Natural killer cell (primary cell): ENCODE measurements at regions of chr3 and their contacts with region 1.

Region 1: GRCh38 chr3:149086232-149086988 is at the start of gene HLTF:
- DNase-seq: peak; percentile 85 to 96
- ATAC-seq: peak; percentile 98 to 99 (median 98)
- H3K4me3 ChIP-seq: peak within 1 kb of the TSS; percentile 68
- H3K4me3 Mint-ChIP-seq: peak within 1 kb of the TSS; percentile 94
- H3K27ac ChIP-seq: peak within 1 kb of the TSS; percentile 5
- H3K27ac Mint-ChIP-seq: peak within 1 kb of the TSS; percentile 81 to 89
- H3K4me1 ChIP-seq: peaks cover 18% of the 10 kb centered on the region
- H3K4me1 Mint-ChIP-seq: peaks cover 20 to 23% of the 10 kb centered on the region in 2 donors
- H3K27me3 ChIP-seq: no peaks in the 10 kb centered on the region
- H3K27me3 Mint-ChIP-seq: no peaks in the 10 kb centered on the region
- CTCF ChIP-seq: no peak
- total RNA-seq, gene HLTF: 15.0 to 19.0 (median 18.3) TPM

Region 2: DNA sequence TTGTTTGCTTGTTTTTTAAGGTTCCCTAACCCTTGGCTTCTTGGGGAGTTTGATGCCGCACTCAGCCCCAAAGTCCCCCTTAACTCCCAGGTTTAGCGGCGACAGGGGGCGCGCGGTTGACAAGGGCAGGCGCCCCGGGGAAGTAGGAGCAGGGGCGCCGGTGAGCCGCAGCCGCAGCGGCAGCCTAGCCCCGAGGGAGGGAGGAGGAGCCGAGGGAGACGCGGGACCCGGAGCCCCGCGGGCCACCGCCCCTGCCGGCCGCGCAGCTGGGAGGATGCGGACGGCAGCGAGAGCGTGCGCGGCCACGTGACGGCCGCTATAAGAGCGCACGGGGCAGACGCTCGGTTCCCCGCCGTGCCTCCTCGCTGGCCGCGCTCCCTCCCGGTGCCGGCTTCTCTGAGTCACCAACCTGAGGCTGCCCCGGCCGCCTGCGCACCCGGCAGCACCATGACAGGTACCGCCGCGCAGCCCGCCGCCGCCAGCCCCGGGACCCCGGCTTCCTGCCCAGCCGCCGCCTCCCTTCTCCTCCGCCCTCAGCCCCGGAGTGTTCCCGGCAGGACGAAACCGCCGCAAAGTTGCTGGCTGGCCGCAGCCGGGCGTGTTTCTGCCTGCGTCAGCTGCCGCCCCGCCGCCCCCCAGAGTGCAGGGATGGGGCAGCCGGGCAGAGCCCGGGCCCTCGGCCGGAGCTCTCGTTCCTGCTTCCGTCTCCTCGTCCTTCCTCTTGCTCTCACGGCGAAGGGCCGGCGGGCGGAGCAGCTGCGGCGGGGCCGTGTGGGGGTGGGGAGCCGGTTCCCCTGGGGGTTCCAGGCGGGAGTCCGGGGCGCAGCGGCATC is 95.0 kb before region 1 on chr3 and contains the start of gene GYG1:
- intact Hi-C with region 1: loop called (anchors 5 kb)
- DNase-seq: peak; percentile 78 to 93
- ATAC-seq: peak; percentile 83 to 91 (median 88)
- H3K4me3 ChIP-seq: peak within 1 kb of the TSS; percentile 82
- H3K4me3 Mint-ChIP-seq: peak within 1 kb of the TSS; percentile 86
- H3K27ac ChIP-seq: peak within 1 kb of the TSS; percentile 88
- H3K27ac Mint-ChIP-seq: peak within 1 kb of the TSS; percentile 70 to 91
- H3K4me1 ChIP-seq: peaks cover 25% of the 10 kb centered on the region
- H3K4me1 Mint-ChIP-seq: peaks cover 28 to 30% of the 10 kb centered on the region in 2 donors
- H3K27me3 ChIP-seq: no peaks in the 10 kb centered on the region
- H3K27me3 Mint-ChIP-seq: no peaks in the 10 kb centered on the region
- CTCF ChIP-seq: no peak
- total RNA-seq, gene GYG1: 46.6 to 56.5 (median 49.6) TPM

Region 3: DNA sequence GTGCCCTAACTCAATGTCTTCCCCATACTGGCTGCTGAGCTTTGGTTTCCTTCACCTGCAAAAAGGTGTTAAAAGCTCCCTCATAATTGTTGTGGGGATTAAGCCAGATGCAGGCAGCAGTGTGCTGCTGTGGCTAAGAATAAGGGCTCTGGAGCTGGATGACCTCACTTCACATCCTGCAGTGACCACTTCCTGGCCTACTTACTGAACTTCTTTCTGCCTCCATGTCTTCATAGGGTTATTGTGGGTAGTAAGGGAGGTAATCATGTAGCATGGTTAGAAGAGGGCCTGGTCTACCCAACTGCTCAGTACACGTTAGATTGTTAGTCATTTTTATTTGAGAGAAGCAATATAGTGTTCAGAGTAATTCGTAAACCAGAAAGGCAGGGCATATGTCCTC is 76.7 kb before region 1 on chr3:
- intact Hi-C with region 1: loop called (anchors 5 kb)
- DNase-seq: peak; percentile 44 to 82
- ATAC-seq: peak; percentile 93 to 98 (median 96)
- H3K4me3 ChIP-seq: no peak overlapping the region
- H3K4me3 Mint-ChIP-seq: peak overlapping the region; percentile 78
- H3K27ac ChIP-seq: peak overlapping the region; percentile 83
- H3K27ac Mint-ChIP-seq: peak overlapping the region; percentile 87 to 90
- H3K4me1 ChIP-seq: peaks cover 28% of the 10 kb centered on the region
- H3K4me1 Mint-ChIP-seq: peaks cover 52 to 54% of the 10 kb centered on the region in 2 donors
- H3K27me3 ChIP-seq: no peaks in the 10 kb centered on the region
- H3K27me3 Mint-ChIP-seq: no peaks in the 10 kb centered on the region
- CTCF ChIP-seq: no peak

Region 4: GRCh38 chr3:149129326-149130205 is 43.2 kb after region 1 on chr3 and contains the start of gene HPS3:
- intact Hi-C with region 1: loop called (anchors 1 kb)
- DNase-seq: peak; percentile 82 to 91
- ATAC-seq: peak; percentile 82 to 91 (median 88)
- H3K4me3 ChIP-seq: peak within 1 kb of the TSS; percentile 80
- H3K4me3 Mint-ChIP-seq: peak within 1 kb of the TSS; percentile 94
- H3K27ac ChIP-seq: peak within 1 kb of the TSS; percentile 74
- H3K27ac Mint-ChIP-seq: peak within 1 kb of the TSS; percentile 91 to 96
- H3K4me1 ChIP-seq: peaks cover 21% of the 10 kb centered on the region
- H3K4me1 Mint-ChIP-seq: peaks cover 42 to 48% of the 10 kb centered on the region in 2 donors
- H3K27me3 ChIP-seq: no peaks in the 10 kb centered on the region
- H3K27me3 Mint-ChIP-seq: peaks cover 0 to 2% of the 10 kb centered on the region in 2 donors
- CTCF ChIP-seq: no peak
- total RNA-seq, gene HPS3: 19.6 to 35.5 (median 24.7) TPM